ENCODE measurements at regions of chr2 and their contacts with region 1.

Region 1: DNA sequence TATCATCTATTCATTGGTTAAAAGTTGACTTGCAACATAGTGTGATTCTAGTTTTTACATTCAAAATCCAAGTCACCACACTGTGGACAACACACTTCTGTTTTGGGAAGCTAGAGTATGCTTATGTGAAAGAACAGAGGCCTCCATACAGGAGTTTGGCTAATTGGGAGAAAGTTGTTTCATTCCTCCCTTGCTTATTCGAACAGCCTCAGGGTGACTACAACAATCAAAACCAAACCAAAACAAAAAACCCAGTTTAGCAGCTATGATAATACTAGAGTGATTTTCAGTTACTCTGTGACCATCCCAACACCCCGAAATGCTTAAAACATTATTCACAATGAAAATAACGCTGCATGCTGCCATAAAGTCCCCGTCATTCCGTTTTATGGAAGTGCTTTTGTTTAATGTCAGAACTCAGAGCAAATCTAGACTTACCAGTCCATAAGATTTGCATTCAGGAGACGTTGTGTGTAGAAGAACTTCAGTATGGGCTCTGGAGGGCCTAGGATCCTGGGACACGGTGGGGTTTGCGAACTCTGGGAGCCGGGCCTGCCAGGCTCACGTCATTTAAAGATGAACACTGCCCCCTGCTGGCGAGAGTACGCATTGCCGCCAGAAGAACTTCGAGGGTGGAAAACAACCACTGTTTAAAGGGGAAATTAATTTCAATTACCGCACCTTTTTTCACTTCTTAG is 111.4 kb downstream of the FTCDNL1 start:
- DNase-seq: peak; percentile 51 to 79
- ATAC-seq: peak; percentile 61 to 80 (median 68)
- H3K4me3 ChIP-seq: peak overlapping the region; percentile 25
- H3K27ac ChIP-seq: no peak overlapping the region
- H3K4me1 ChIP-seq: no peaks in the 10 kb centered on the region
- H3K27me3 ChIP-seq: no peaks in the 10 kb centered on the region
- CTCF ChIP-seq: peak; percentile 96

Region 2: GRCh38 chr2:198309673-198310280 is 1429.8 kb before region 1 on chr2:
- intact Hi-C with region 1: loop called (anchors 5 kb)
- DNase-seq: no peak
- ATAC-seq: peak in 2 of 4 donors; percentile 46 to 73
- H3K4me3 ChIP-seq: no peak overlapping the region
- H3K27ac ChIP-seq: no peak overlapping the region
- H3K4me1 ChIP-seq: no peaks in the 10 kb centered on the region
- H3K27me3 ChIP-seq: peaks cover 0 to 4% (median 0%) of the 10 kb centered on the region in 3 donors
- CTCF ChIP-seq: peak; percentile 80

Region 3: GRCh38 chr2:198913394-198914152 is 826.0 kb before region 1 on chr2:
- intact Hi-C with region 1: no loop called
- DNase-seq: no peak
- ATAC-seq: no peak
- H3K4me3 ChIP-seq: no peak overlapping the region
- H3K27ac ChIP-seq: no peak overlapping the region
- H3K4me1 ChIP-seq: no peaks in the 10 kb centered on the region
- H3K27me3 ChIP-seq: no peaks in the 10 kb centered on the region
- CTCF ChIP-seq: no peak

Region 4: DNA sequence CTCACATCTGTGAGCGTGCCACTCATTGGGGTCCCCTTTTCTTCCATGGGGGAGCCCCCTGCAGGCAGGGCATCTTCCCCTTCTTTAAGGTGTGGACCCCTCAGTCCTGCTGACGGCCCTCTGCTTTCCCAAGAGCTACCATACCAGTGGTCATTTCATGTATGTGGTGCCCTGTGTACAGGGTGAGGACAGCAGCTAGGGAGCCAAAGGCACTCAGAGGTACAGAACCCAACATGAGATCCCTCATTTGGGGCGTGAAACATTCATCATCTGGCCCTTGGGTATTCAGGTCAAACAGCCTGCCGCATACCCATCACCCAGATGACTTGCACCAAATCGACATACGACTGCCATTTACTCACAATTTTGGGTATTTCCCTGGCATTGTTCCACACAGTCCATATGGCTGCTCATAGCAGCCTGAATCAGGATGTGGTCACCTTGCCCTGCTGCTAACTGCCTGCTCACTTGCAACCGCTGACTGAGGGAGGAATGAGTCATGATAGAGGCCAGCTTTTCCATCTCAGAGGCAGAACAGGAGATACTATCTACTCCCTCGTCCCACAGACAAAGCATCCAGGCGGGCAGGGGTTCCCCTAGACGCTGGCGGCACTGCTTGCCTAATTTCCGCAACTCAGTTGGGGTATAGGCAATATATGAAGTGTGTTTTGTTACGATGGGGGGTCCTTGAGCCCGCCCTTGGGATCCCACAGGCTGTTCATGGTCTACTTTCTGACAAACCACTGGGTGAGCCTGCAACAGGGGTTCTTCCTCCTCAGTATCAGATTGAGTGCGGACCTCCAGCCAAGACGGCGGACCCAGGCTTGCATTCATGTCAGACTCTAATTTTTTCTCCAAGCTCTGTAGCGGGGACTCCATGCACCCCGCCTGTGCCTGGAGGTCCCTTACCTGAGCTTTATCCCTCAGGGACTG is 510.4 kb before region 1 on chr2:
- intact Hi-C with region 1: no loop called
- DNase-seq: no peak
- ATAC-seq: no peak
- H3K4me3 ChIP-seq: no peak overlapping the region
- H3K27ac ChIP-seq: no peak overlapping the region
- H3K4me1 ChIP-seq: no peaks in the 10 kb centered on the region
- H3K27me3 ChIP-seq: no peaks in the 10 kb centered on the region
- CTCF ChIP-seq: no peak

Region 5: GRCh38 chr2:199471443-199472057 is 268.0 kb before region 1 on chr2:
- intact Hi-C with region 1: loop called in 1 of 2 experiments (anchors 10 kb)
- DNase-seq: peak; percentile 67 to 82
- ATAC-seq: peak; percentile 86 to 97 (median 90)
- H3K4me3 ChIP-seq: peak overlapping the region; percentile 45
- H3K27ac ChIP-seq: no peak overlapping the region
- H3K4me1 ChIP-seq: peaks cover 24% of the 10 kb centered on the region
- H3K27me3 ChIP-seq: peaks cover 3 to 98% (median 49%) of the 10 kb centered on the region in 3 donors
- CTCF ChIP-seq: peak; percentile 64

Region 6: GRCh38 chr2:199704358-199705238 is 35.0 kb before region 1 on chr2:
- intact Hi-C with region 1: loop called (anchors 2 to 5 kb)
- DNase-seq: no peak
- ATAC-seq: peak; percentile 55 to 91 (median 73)
- H3K4me3 ChIP-seq: no peak overlapping the region
- H3K27ac ChIP-seq: no peak overlapping the region
- H3K4me1 ChIP-seq: no peaks in the 10 kb centered on the region
- H3K27me3 ChIP-seq: no peaks in the 10 kb centered on the region
- CTCF ChIP-seq: peak; percentile 60

Region 7: DNA sequence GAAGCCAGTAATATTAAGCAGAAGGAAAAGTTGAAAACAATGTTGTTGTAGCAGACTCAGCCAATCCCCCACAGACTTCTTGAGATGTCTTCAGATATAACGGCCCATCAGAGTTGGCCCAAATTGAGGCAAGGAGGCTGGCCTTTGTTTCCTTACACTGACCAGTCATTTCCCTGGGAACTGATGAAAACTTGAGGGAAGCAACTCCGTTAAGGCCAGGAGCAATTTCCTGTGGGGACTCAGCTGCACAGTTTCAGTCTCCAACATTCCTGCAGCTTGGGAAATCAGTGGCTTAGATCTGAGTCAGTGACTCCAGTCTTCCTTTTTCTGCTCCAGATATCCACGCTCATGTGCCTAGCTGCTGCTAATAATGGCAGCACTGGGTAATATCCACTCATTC is 35.7 kb after region 1 on chr2:
- intact Hi-C with region 1: no loop called
- DNase-seq: no peak
- ATAC-seq: peak in 3 of 4 donors; percentile 25 to 57 (median 52)
- H3K4me3 ChIP-seq: no peak overlapping the region
- H3K27ac ChIP-seq: no peak overlapping the region
- H3K4me1 ChIP-seq: no peaks in the 10 kb centered on the region
- H3K27me3 ChIP-seq: no peaks in the 10 kb centered on the region
- CTCF ChIP-seq: no peak

Measured in psoas muscle (tissue), 8 donors.